ENCODE measurements at regions of chr18 and their contacts with region 1.

Region 1: DNA sequence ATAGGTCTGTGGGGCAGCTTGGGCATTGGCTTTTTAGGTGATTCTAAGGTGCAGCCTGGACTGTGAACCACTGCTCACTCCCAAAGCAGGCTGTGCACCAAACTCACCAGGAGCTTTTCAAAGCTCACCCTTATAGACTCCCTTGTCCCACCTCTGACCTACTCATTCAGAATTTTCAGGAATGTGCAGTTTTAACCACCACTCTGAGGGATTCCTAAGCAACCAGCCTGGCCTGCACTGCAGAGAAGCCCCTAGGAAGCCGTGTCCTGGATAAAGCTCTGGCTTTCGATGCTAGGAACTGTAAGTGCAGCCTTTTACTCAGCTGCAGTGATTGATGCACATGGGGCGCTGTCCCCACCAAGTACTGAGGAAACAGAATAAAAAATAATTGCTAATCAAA is 33.0 kb downstream of the MRO start:
- DNase-seq: no peak
- ATAC-seq: peak; percentile 17
- H3K4me3 ChIP-seq: no peak overlapping the region
- H3K4me1 ChIP-seq: no peaks in the 10 kb centered on the region
- CTCF ChIP-seq: no peak

Region 2: GRCh38 chr18:50507120-50507590 is 279.7 kb before region 1 on chr18:
- intact Hi-C with region 1: loop called in 1 of 2 experiments (anchors 2 kb)
- DNase-seq: peak in 2 of 3 donors; percentile 50 to 53
- ATAC-seq: peak; percentile 48
- H3K4me3 ChIP-seq: no peak overlapping the region
- H3K4me1 ChIP-seq: no peaks in the 10 kb centered on the region
- CTCF ChIP-seq: peak; percentile 25

Region 3: GRCh38 chr18:50986360-50987087 is 199.7 kb after region 1 on chr18:
- intact Hi-C with region 1: no loop called
- DNase-seq: no peak
- ATAC-seq: no peak
- H3K4me3 ChIP-seq: no peak overlapping the region
- H3K4me1 ChIP-seq: peaks cover 11% of the 10 kb centered on the region
- CTCF ChIP-seq: no peak

Measured in mucosa of descending colon (tissue), 3 donors.